AG04450 (cell line): ENCODE measurements at regions of chr5 and their contacts with region 1.

Region 1: GRCh38 chr5:149680810-149681221 is 49.3 kb upstream of the PPARGC1B start:
- DNase-seq: no peak
- H3K4me3 ChIP-seq: no peak overlapping the region
- H3K27ac ChIP-seq: no peak overlapping the region
- H3K27me3 ChIP-seq: peaks cover 44% of the 10 kb centered on the region
- CTCF ChIP-seq: no peak

Region 2: DNA sequence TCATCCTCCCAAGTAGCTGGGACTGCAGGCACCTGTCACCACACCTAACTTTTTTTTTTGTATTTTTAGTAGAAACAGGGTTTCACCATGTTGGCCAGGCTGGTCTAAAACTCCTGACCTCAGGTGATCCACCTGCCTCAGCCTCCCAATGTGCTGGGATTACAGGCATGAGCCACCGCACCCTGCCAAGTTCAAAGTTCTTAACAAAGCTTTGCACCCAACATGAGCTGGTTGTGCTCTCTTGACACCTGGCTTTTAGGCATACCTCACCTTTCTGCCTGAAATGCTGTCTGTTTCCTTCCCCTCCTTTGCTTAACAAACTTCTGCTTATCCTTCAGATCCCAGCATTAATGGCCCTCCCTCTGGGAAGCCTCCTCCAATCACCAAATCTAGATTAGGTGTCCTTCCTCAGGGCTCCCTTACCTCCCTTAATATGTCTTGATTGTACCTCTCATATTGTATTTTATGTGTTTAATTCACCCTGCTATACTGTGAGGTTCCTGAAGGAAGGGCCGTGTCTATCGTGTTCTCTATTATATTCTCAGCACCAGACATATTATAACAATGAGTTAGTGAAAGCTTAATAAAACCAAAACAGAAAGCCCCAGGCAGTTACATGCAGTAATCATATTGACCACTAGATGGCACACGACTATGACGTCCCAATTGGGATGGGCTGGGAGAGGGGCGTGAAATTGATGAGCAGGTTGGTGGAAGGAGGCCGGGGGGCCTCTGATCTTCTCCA is 13.6 kb before region 1 on chr5:
- CTCF ChIA-PET with region 1: interaction called, 21 read pairs
- POLR2A ChIA-PET with region 1: no interaction called
- DNase-seq: no peak
- H3K4me3 ChIP-seq: no peak overlapping the region
- H3K27ac ChIP-seq: no peak overlapping the region
- H3K27me3 ChIP-seq: peaks cover 7% of the 10 kb centered on the region
- CTCF ChIP-seq: peak; percentile 79

Region 3: DNA sequence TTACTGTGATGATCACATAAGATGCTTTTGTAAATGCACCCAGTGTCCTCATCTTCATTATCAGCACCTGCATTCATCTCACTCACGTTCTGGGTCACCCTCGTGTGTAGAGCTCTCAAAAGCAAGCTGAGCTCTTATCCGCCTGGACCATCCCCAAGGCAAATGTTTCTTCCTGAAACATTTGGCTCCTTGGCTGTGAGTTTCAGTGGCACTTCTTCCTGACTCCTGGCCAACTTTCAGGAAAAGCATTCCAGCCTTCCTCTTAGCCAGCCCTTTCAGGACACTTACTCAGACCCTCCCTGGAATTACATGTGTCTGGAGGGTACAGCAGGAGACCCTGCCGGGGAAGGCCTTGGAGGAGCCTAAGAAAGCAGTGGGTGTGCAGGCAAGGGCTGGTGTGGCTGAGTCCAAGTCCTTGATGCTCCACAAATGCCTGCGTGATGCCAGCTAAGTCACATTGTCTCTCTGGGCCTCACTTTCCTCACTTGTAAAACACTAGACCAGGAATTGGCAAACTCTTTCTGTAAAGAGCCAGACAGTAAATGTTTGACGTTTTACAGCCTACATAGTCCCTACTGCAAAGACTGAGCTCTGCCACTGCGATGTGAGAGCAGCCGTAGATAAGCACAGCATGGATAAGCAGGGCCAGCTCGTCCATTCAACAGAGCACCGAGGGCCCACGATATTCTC is 191.7 kb after region 1 on chr5:
- CTCF ChIA-PET with region 1: no interaction called
- POLR2A ChIA-PET with region 1: no interaction called
- DNase-seq: no peak
- H3K4me3 ChIP-seq: no peak overlapping the region
- H3K27ac ChIP-seq: no peak overlapping the region
- H3K27me3 ChIP-seq: peaks cover 41% of the 10 kb centered on the region
- CTCF ChIP-seq: no peak